ENCODE measurements at regions of chr5 and their contacts with region 1.

Region 1: DNA sequence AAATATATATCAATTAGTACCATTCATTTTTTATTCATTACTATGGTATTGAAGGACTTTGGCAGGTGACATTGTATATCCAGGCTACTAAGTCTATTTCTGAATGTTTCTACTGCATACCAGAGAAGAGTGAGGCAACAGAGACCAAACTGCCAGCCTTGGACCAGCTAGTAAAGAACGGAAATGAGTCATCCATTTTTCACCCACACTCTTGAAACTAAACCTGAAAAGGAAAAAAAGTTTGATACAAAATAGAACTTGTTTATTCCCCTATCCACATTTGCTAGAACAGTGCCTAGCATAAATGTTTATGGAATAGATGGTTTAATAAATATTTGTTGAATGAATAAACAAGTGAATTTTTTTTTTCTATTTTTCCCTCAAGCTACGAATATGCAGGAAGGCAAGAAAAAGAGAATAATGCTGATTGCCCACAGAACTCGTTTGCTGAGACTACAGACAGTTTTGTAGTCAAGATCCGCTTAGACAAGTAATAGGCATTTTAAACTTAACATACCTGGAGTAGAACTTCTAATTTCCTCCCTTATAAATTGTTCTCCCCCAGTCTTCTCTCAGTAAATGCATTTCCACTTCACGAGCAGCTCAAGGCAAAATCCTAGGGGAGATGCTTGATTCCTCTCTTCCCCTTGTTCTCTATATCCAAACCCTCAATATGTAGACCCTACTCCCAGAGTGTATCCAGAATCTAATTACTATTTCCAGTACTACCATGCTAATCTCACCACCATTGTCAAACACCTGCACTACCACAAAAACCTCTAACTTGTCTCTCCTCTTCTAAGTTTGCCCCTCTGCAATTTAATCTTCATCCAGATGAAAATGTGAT is 146.2 kb upstream of the RASA1 start:
- DNase-seq: peak in 8 of 9 donors; percentile 2 to 38 (median 28)
- ATAC-seq: peak; percentile 86
- H3K4me3 ChIP-seq: peak overlapping the region; percentile 24
- H3K4me3 Mint-ChIP-seq: peak overlapping the region; percentile 52 to 69 (median 64)
- H3K27ac ChIP-seq: no peak overlapping the region
- H3K27ac Mint-ChIP-seq: peak overlapping the region; percentile 15 to 89 (median 71)
- H3K4me1 ChIP-seq: peaks cover 22 to 38% of the 10 kb centered on the region in 2 donors
- H3K4me1 Mint-ChIP-seq: peaks cover 25 to 50% (median 38%) of the 10 kb centered on the region in 7 donors
- H3K27me3 ChIP-seq: no peaks in the 10 kb centered on the region
- H3K27me3 Mint-ChIP-seq: no peaks in the 10 kb centered on the region

Region 2: GRCh38 chr5:87029951-87030350 is 91.6 kb before region 1 on chr5:
- CTCF ChIA-PET with region 1: no interaction called
- POLR2A ChIA-PET with region 1: no interaction called
- intact Hi-C with region 1: loop called in 1 of 2 experiments (anchors 5 kb)
- DNase-seq: no peak
- ATAC-seq: no peak
- H3K4me3 ChIP-seq: no peak overlapping the region
- H3K4me3 Mint-ChIP-seq: no peak overlapping the region
- H3K27ac ChIP-seq: no peak overlapping the region
- H3K27ac Mint-ChIP-seq: no peak overlapping the region
- H3K4me1 ChIP-seq: peaks cover 0 to 7% of the 10 kb centered on the region in 2 donors
- H3K4me1 Mint-ChIP-seq: peaks cover 12 to 35% (median 26%) of the 10 kb centered on the region in 7 donors
- H3K27me3 ChIP-seq: no peaks in the 10 kb centered on the region
- H3K27me3 Mint-ChIP-seq: peaks cover 0 to 32% (median 0%) of the 10 kb centered on the region in 5 donors

Region 3: GRCh38 chr5:87048156-87048555 is 73.4 kb before region 1 on chr5:
- CTCF ChIA-PET with region 1: no interaction called
- POLR2A ChIA-PET with region 1: no interaction called
- intact Hi-C with region 1: no loop called
- DNase-seq: no peak
- ATAC-seq: no peak
- H3K4me3 ChIP-seq: no peak overlapping the region
- H3K4me3 Mint-ChIP-seq: no peak overlapping the region
- H3K27ac ChIP-seq: no peak overlapping the region
- H3K27ac Mint-ChIP-seq: no peak overlapping the region
- H3K4me1 ChIP-seq: no peaks in the 10 kb centered on the region
- H3K4me1 Mint-ChIP-seq: peaks cover 0 to 2% (median 0%) of the 10 kb centered on the region in 7 donors
- H3K27me3 ChIP-seq: no peaks in the 10 kb centered on the region
- H3K27me3 Mint-ChIP-seq: peaks cover 0 to 8% (median 0%) of the 10 kb centered on the region in 5 donors

Region 4: DNA sequence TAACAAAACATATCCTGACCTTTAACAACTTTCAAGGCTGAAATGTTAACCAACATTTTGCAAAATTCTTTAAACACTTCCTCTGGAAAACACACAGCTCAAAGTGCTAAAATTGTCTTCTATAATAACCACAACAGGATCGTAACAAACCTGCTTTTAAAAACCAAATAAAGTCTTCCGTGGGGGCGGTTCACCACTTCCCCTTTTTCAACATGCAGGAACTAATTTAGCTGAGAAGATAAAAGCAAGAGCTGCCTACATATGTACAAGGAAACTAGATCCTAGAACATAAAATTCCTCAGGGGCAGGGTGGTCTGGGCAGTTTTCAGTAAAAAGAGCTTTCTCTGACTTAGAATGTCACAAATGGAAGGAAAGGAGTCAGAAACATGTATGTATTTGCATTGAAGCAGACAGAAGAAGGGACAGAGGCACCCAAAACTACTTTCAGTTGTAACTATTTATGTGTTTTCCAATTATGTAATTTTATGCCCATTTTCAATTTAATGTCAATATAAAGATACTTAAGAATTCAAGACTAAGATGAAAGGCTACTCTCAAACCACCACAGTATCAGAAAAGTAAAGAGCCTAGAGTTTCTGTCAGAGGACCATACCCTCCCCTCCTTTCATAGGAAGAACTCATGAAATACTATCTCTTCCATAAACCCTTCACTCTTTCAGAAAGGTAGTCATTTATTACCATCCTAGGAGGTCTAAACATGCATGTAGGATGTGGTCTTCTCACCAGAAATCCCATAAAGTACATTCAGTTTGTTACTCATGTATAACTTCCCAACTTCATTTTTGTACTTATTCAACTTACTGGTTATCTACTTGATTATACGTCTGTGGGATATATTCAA is 39.8 kb before region 1 on chr5:
- CTCF ChIA-PET with region 1: no interaction called
- POLR2A ChIA-PET with region 1: interaction called, 4 read pairs
- intact Hi-C with region 1: loop called (anchors 1 kb)
- DNase-seq: peak in 8 of 9 donors; percentile 11 to 59 (median 44)
- ATAC-seq: peak; percentile 84
- H3K4me3 ChIP-seq: no peak overlapping the region
- H3K4me3 Mint-ChIP-seq: peak overlapping the region; percentile 42 to 86 (median 72)
- H3K27ac ChIP-seq: no peak overlapping the region
- H3K27ac Mint-ChIP-seq: peak overlapping the region; percentile 53 to 85 (median 68)
- H3K4me1 ChIP-seq: peaks cover 18 to 35% of the 10 kb centered on the region in 2 donors
- H3K4me1 Mint-ChIP-seq: peaks cover 20 to 60% (median 51%) of the 10 kb centered on the region in 7 donors
- H3K27me3 ChIP-seq: no peaks in the 10 kb centered on the region
- H3K27me3 Mint-ChIP-seq: no peaks in the 10 kb centered on the region

Region 5: DNA sequence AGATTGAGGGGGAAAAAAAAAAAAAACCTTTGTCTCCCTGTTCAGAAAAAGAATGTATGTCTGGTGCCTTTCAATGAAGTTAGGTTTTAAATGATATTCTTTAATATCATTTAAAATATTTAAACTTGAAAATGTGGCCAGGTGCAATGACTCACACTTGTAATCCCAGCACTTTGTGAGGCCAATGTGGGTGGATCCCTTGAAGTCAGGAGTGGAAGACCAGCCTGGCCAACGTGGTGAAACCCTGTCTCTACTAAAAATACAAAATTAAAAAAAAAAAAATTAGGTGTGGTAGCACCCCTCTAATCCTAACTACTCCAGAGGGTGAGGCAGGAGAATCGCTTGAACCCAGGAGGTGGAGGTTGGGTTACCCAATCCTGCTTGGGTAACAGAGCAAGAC is 35.1 kb after region 1 on chr5:
- CTCF ChIA-PET with region 1: no interaction called
- POLR2A ChIA-PET with region 1: no interaction called
- intact Hi-C with region 1: loop called in 1 of 2 experiments (anchors 5 kb)
- DNase-seq: no peak
- ATAC-seq: no peak
- H3K4me3 ChIP-seq: no peak overlapping the region
- H3K4me3 Mint-ChIP-seq: no peak overlapping the region
- H3K27ac ChIP-seq: no peak overlapping the region
- H3K27ac Mint-ChIP-seq: no peak overlapping the region
- H3K4me1 ChIP-seq: no peaks in the 10 kb centered on the region
- H3K4me1 Mint-ChIP-seq: peaks cover 0 to 10% (median 0%) of the 10 kb centered on the region in 7 donors
- H3K27me3 ChIP-seq: no peaks in the 10 kb centered on the region
- H3K27me3 Mint-ChIP-seq: no peaks in the 10 kb centered on the region

Region 6: GRCh38 chr5:87267574-87268125 is 146.1 kb after region 1 on chr5 and contains the start of gene RASA1:
- CTCF ChIA-PET with region 1: no interaction called
- POLR2A ChIA-PET with region 1: no interaction called
- intact Hi-C with region 1: loop called (anchors 1 to 2 kb)
- DNase-seq: peak in 3 of 9 donors; percentile 51 to 90 (median 76)
- ATAC-seq: peak; percentile 75
- H3K4me3 ChIP-seq: peak within 1 kb of the TSS; percentile 95
- H3K4me3 Mint-ChIP-seq: peak within 1 kb of the TSS; percentile 86 to 100 (median 98)
- H3K27ac ChIP-seq: peak within 1 kb of the TSS; percentile 81
- H3K27ac Mint-ChIP-seq: peak within 1 kb of the TSS; percentile 84 to 96 (median 91)
- H3K4me1 ChIP-seq: peaks cover 13 to 14% of the 10 kb centered on the region in 2 donors
- H3K4me1 Mint-ChIP-seq: peaks cover 11 to 47% (median 35%) of the 10 kb centered on the region in 7 donors
- H3K27me3 ChIP-seq: no peaks in the 10 kb centered on the region
- H3K27me3 Mint-ChIP-seq: peaks cover 0 to 7% (median 0%) of the 10 kb centered on the region in 5 donors
- total RNA-seq, gene RASA1: 20.9 to 30.7 (median 27.5) TPM

Region 7: DNA sequence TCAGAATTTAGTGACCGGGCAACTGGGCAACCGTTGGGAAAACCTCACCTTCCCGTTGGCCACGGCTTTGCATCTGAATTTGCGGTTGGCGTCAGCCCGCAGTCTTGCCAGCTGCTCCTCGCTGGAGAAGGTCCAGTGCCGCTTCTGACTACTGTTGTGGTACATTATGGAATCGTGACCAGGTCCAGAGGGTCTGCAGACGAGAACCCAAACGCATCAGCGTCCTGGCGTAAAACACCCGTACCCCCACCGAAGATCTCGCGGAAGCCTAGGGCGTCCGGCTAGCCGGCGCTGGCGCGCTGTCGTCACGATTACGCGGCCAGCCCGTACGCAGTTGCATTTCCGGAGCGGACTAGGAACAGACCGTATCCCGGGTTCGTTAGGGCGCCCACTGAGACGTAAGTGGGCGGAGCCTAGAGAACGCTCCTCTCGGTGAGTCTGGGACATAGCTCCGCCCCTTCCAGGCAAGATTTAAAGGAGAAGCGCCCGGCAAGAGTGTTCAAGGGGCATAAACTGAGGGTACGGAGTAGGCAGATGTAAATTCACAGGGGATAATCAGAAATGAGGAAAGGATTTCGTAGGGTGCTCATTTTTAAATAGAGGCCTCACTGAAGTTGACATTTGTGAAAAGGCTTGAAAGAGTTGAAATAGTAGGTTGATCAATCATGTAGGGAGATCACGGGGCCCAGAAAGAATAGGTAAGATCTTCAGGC is 291.3 kb after region 1 on chr5 and contains the start of gene CCNH:
- CTCF ChIA-PET with region 1: no interaction called
- POLR2A ChIA-PET with region 1: no interaction called
- intact Hi-C with region 1: loop called (anchors 1 to 5 kb)
- DNase-seq: peak; percentile 83 to 98 (median 97)
- ATAC-seq: peak; percentile 99
- H3K4me3 ChIP-seq: peak within 1 kb of the TSS; percentile 88
- H3K4me3 Mint-ChIP-seq: peak within 1 kb of the TSS; percentile 90 to 100 (median 95)
- H3K27ac ChIP-seq: peak within 1 kb of the TSS; percentile 99
- H3K27ac Mint-ChIP-seq: peak within 1 kb of the TSS; percentile 92 to 99 (median 98)
- H3K4me1 ChIP-seq: peaks cover 26 to 28% of the 10 kb centered on the region in 2 donors
- H3K4me1 Mint-ChIP-seq: peaks cover 24 to 62% (median 50%) of the 10 kb centered on the region in 7 donors
- H3K27me3 ChIP-seq: no peaks in the 10 kb centered on the region
- H3K27me3 Mint-ChIP-seq: peaks cover 0 to 3% (median 0%) of the 10 kb centered on the region in 5 donors
- total RNA-seq, gene CCNH: 57.5 to 239 (median 113) TPM

Measured in naive thymus-derived CD4-positive, alpha-beta T cell (primary cell).